Heart left ventricle (tissue), 16 donors: ENCODE measurements at regions of chr17 and their contacts with region 1.

Region 1: GRCh38 chr17:67717624-67718329 is at the start of gene NOL11:
- DNase-seq: peak; percentile 99 to 100 (median 99)
- ATAC-seq: peak; percentile 99 to 100 (median 99)
- H3K4me3 ChIP-seq: peak within 1 kb of the TSS; percentile 62 to 99 (median 81)
- H3K27ac ChIP-seq: peak within 1 kb of the TSS; percentile 63 to 94 (median 84)
- H3K4me1 ChIP-seq: peaks cover 0 to 24% (median 18%) of the 10 kb centered on the region in 12 donors
- H3K27me3 ChIP-seq: no peaks in the 10 kb centered on the region
- CTCF ChIP-seq: peak; percentile 88 to 99 (median 94)
- POLR2A ChIP-seq: peak in 1 of 2 donors; percentile 86
- total RNA-seq, gene NOL11: 18.1 to 29.6 (median 22.5) TPM

Region 2: GRCh38 chr17:67366193-67367157 is 351.3 kb before region 1 on chr17 and contains the start of gene PSMD12:
- intact Hi-C with region 1: loop called in 1 of 10 experiments (anchors 10 kb)
- DNase-seq: peak; percentile 94 to 98 (median 95)
- ATAC-seq: peak; percentile 95 to 98 (median 98)
- H3K4me3 ChIP-seq: peak within 1 kb of the TSS; percentile 72 to 98 (median 86)
- H3K27ac ChIP-seq: peak within 1 kb of the TSS; percentile 83 to 96 (median 92)
- H3K4me1 ChIP-seq: peaks cover 6 to 45% (median 39%) of the 10 kb centered on the region in 12 donors
- H3K27me3 ChIP-seq: no peaks in the 10 kb centered on the region
- CTCF ChIP-seq: peak in 2 of 12 donors; percentile 3 to 17
- POLR2A ChIP-seq: peak in 1 of 2 donors; percentile 75
- total RNA-seq, gene PSMD12: 18.2 to 57.2 (median 46.5) TPM

Region 3: GRCh38 chr17:67824735-67825626 is 107.2 kb after region 1 on chr17 and contains the start of gene BPTF:
- intact Hi-C with region 1: loop called in 3 of 10 experiments (anchors 1 to 10 kb)
- DNase-seq: peak; percentile 92 to 96 (median 94)
- ATAC-seq: peak; percentile 94 to 98 (median 96)
- H3K4me3 ChIP-seq: peak within 1 kb of the TSS; percentile 51 to 90 (median 82)
- H3K27ac ChIP-seq: peak within 1 kb of the TSS; percentile 85 to 97 (median 94)
- H3K4me1 ChIP-seq: peaks cover 0 to 40% (median 29%) of the 10 kb centered on the region in 12 donors
- H3K27me3 ChIP-seq: peaks cover 0 to 3% (median 0%) of the 10 kb centered on the region in 9 donors
- CTCF ChIP-seq: peak; percentile 73 to 98 (median 95)
- POLR2A ChIP-seq: peak in 1 of 2 donors; percentile 43
- total RNA-seq, gene BPTF: 50.5 to 96.9 (median 77.6) TPM